ENCODE measurements at regions of chr9 and their contacts with region 1.

Region 1: DNA sequence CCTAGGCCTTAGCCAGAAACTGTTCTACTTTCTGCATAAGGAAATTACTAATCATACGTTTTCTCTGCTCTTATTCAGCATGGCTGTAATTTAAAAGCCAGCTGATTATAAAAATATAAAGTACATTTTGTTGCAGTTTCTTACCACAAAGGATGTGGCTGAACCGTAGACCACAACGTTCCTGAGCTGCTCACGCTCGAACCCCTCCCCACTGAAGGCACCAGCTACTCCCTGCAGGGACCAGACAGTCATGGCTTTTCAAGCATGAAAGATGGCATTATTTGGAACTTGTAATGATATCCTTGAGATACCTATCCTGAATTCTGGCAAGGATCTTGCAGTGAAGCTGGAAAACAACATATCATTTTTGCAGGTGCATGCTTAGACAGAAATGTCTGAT is 91.8 kb upstream of the DMRT1 start:
- DNase-seq: peak; percentile 85
- ATAC-seq: peak; percentile 70
- H3K4me3 Mint-ChIP-seq: peak overlapping the region; percentile 32
- H3K27ac Mint-ChIP-seq: peak overlapping the region; percentile 67
- H3K4me1 Mint-ChIP-seq: peaks cover 67% of the 10 kb centered on the region
- H3K27me3 Mint-ChIP-seq: no peaks in the 10 kb centered on the region

Region 2: DNA sequence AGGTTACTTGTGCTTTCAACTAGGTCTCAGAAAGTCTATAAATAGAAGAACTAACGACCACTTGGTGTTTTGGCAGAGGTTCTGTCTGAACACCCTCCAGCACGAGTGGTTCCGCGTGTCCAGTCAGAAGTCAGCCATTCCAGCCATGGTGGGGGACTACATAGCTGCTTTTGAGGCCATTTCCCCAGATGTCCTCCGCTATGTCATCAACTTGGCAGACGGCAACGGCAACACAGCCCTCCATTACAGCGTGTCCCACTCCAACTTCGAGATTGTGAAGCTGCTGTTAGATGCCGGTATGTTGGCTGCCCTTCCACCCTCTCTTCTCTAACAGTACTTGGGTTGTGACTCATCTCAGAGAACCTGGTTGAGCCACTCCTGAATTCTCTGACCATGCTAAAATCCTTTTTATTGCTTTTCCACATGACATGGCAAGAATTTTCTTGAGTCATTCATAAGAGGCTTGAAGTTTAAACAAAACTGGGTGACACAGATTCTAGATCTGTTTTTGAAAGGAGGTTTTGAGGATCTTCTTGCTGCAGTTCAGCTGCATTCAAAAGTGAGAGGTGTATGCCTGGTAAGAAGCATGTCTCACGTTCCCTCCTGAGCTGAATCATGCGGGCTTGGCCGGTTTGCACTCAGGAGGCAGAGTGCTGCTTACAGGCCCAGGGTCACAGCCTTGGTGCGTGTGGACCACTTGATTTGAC is 11.4 kb before region 1 on chr9:
- CTCF ChIA-PET with region 1: no interaction called
- DNase-seq: no peak
- ATAC-seq: no peak
- H3K4me3 Mint-ChIP-seq: no peak overlapping the region
- H3K27ac Mint-ChIP-seq: no peak overlapping the region
- H3K4me1 Mint-ChIP-seq: peaks cover 1% of the 10 kb centered on the region
- H3K27me3 Mint-ChIP-seq: no peaks in the 10 kb centered on the region

Region 3: GRCh38 chr9:763692-764524 is 14.2 kb after region 1 on chr9:
- CTCF ChIA-PET with region 1: interaction called, 13 read pairs
- DNase-seq: peak; percentile 79
- ATAC-seq: peak; percentile 99
- H3K4me3 Mint-ChIP-seq: no peak overlapping the region
- H3K27ac Mint-ChIP-seq: no peak overlapping the region
- H3K4me1 Mint-ChIP-seq: peaks cover 34% of the 10 kb centered on the region
- H3K27me3 Mint-ChIP-seq: peaks cover 40% of the 10 kb centered on the region

Region 4: GRCh38 chr9:818958-819357 is 69.2 kb after region 1 on chr9:
- CTCF ChIA-PET with region 1: no interaction called
- DNase-seq: no peak
- ATAC-seq: no peak
- H3K4me3 Mint-ChIP-seq: no peak overlapping the region
- H3K27ac Mint-ChIP-seq: no peak overlapping the region
- H3K4me1 Mint-ChIP-seq: no peaks in the 10 kb centered on the region
- H3K27me3 Mint-ChIP-seq: peaks cover 6% of the 10 kb centered on the region

Measured in activated CD8-positive, alpha-beta memory T cell treated with anti-CD3 and anti-CD28 coated beads, Interleukin-2, amount 10 ng/mL, durations not matched to agents 7 days and 5 days (primary cell).